ENCODE measurements at regions of chr17 and their contacts with region 1.

Region 1: DNA sequence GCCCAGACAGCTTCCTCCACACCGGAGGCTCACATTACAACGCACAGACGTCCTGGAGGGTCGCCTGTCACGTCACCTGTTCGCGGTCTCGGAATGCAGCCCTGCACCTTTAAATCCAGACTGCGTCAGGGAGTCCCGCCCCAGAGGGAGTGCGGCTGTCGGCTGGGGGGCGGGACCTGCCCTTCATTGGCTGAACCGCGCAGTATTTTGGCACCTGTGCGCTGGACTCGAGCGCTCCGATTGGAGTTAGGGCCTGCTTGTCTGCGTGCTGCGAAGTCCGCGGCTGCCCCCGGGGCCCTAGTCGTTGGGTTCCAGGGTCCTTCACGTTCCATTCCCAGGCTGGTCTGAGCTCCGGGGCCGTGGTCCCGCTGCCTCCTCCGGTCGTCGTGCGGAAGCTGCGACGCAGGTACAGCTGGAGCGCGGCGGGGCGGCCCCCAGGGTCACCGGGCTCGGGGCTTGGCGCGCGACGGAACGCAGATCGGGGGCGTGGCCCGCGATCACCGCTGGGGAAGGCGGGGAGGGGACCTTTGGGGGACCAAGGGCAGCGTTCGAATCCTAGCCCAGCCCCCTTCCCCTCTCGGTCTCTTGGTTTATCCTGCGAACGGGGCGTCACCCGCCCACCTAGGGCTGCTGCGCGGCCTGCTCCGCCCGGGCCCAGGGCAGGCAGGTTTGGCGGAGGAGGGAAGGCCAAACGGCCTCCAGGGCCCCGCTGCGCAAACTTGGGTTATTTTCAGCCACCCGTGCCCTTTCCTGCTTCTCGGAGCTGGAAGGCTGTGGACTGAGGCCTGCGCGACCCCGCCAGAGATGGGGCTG is at the start of gene MIEF2:
- DNase-seq: peak; percentile 94
- H3K4me3 Mint-ChIP-seq: peak within 1 kb of the TSS; percentile 82
- H3K27ac Mint-ChIP-seq: peak within 1 kb of the TSS; percentile 79
- H3K4me1 Mint-ChIP-seq: peaks cover 11% of the 10 kb centered on the region
- H3K27me3 Mint-ChIP-seq: no peaks in the 10 kb centered on the region
- CTCF ChIP-seq: no peak
- total RNA-seq, gene MIEF2: 12.1 and 14.1 TPM in 2 replicates

Region 2: GRCh38 chr17:18158022-18158600 is 102.4 kb before region 1 on chr17:
- CTCF ChIA-PET with region 1: no interaction called
- POLR2A ChIA-PET with region 1: no interaction called
- intact Hi-C with region 1: no loop called
- DNase-seq: peak; percentile 90
- H3K4me3 Mint-ChIP-seq: peak overlapping the region; percentile 86
- H3K27ac Mint-ChIP-seq: peak overlapping the region; percentile 90
- H3K4me1 Mint-ChIP-seq: peaks cover 11% of the 10 kb centered on the region
- H3K27me3 Mint-ChIP-seq: no peaks in the 10 kb centered on the region
- CTCF ChIP-seq: no peak

Region 3: DNA sequence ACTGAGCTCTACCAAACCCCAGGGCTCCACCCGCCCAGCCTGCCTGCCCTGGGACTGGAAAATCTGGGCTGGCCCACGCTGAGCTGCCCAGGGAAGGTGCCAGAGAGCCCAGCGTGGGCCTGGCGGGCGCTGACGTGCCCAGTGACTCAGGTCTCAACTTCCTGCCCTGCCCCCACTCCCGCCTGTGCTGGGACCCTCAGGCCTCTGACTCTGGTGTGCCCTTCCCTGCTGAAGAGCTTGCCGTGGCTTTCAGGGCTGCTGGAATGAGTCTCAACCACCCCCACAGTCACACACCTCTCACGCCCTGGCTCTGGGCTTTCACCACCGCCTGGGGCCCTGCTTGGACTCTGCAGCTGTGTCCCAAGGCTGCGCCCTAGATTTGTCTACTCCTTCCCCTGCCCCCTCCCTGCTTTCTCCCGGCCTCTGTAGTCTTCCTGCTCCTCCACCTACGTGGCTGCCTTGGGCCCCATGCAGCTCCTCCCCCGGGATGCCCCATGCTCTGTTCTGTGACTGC is 24.7 kb before region 1 on chr17:
- CTCF ChIA-PET with region 1: interaction called, 3 read pairs
- POLR2A ChIA-PET with region 1: interaction called, 13 read pairs
- intact Hi-C with region 1: no loop called
- DNase-seq: peak; percentile 82
- H3K4me3 Mint-ChIP-seq: peak overlapping the region; percentile 15
- H3K27ac Mint-ChIP-seq: peak overlapping the region; percentile 73
- H3K4me1 Mint-ChIP-seq: peaks cover 15% of the 10 kb centered on the region
- H3K27me3 Mint-ChIP-seq: no peaks in the 10 kb centered on the region
- CTCF ChIP-seq: no peak